ENCODE measurements at regions of chr16 and their contacts with region 1.

Region 1: DNA sequence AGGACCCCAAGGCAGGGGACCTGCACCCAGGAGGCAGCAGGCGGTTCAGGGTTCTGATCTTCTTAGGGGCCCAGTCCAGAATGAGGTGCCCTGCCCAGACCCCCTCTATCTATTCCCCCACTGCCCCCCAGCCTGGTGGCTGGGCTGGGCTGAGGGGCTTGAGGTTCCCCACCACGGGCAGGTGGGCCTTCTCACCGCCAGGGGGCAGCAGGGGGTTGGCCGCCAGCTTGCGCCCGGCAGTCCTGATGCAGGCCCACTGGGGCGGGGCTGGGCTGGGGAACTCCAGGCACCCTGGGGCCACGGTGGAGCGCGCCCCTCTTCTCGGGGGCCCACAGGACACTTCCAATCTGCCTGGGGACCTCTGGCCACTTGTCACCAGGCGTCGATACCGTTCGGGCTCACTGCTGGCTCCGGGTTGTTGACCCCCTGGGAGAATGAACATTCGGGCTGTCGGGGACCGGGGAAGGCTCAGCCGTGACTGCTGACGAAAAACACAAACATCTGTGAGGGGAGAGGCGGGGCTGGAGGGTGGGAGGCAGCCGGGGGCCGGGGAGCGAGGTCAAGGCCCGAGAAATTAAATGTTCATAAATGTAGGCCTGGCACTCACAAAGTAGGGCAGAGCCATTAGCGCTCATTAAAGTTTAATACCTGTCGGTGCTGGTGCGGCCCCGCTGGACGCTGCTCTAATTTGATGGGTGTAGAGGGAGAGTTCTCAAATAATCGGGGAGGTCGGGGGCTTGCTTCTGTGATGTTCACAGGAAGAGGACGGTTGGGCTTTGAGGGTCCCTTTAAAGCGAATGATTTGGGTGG is 219.2 kb upstream of the GSE1 start:
- DNase-seq: peak; percentile 65 to 84
- ATAC-seq: peak; percentile 40 to 69; a peak in 3 of 6 replicates
- H3K4me3 ChIP-seq: no peak overlapping the region
- H3K27ac ChIP-seq: peak overlapping the region in 1 of 2 experiments; percentile 86; a peak in 4 of 6 replicates
- H3K4me1 ChIP-seq: peaks cover 67% of the 10 kb centered on the region
- CTCF ChIP-seq: peak; percentile 84
- EP300 ChIP-seq: no peak
- POLR2A ChIP-seq: no peak
- RAD21 ChIP-seq: peak; percentile 58 to 69

Region 2: DNA sequence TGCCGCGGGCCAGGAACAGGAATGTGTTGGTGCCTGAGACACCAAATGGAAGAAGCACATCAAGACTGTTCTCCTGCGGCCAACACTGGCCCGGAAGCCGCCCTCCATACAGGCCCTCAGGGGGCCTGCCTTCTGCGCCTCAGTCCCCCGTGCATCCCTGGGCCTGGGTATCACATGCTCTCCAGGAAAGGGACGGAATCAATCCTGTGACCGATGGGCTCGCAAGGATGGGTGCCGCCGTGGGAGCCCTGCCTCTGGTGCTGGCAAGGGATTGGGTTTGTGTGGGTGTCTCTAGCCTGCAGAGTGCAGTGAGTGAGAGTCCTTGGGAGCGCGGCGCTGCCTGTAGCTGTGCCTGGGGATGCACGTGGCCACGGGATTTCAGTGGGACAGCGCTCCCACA is 301.0 kb before region 1 on chr16:
- CTCF ChIA-PET with region 1: no interaction called
- POLR2A ChIA-PET with region 1: no interaction called
- DNase-seq: no peak
- ATAC-seq: no peak
- H3K4me3 ChIP-seq: no peak overlapping the region
- H3K27ac ChIP-seq: no peak overlapping the region
- H3K4me1 ChIP-seq: no peaks in the 10 kb centered on the region
- CTCF ChIP-seq: no peak
- EP300 ChIP-seq: no peak
- POLR2A ChIP-seq: no peak
- RAD21 ChIP-seq: no peak

Region 3: DNA sequence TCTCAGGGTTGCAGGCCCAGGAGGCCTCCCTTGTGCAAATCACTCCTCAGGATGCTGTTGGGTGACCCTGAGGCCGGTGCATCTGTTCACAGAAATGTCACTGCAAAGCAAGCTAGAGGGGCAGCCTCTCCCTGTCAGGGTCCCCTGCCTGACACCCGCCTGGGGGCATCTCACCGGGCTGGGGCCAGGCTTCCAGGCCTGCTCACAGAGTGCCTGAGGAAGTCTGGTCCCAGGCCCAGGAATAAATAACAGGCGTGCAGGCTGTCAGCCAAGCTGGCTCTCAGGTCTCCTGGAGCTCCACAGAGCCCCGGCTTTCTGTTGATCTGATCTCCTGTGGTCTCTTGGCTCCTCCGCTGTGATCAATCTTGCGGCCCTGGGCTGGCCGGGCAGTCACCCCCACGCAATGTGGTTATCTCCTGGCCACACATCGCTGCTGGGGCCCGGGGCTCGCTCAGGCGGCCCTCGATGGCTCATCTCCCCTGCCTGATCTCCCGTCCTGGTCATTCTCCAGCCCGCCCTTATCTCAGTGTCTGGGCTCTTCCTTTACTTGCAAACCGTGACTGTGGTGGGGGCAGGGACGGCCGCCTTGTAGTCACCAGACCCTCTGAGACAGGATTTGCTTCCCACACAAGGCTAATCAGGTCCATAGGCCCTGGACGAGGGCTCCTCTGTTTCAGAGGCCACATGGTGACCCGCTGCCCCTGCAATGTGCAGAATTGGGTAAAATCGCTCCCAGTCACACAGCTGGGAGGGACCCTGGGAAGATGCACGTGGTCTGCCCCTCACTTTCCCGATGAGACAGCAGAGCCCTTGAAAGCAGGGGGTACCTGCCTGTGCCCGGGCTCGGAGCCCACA is 11.9 kb before region 1 on chr16:
- CTCF ChIA-PET with region 1: interaction called, 35 read pairs
- POLR2A ChIA-PET with region 1: no interaction called
- DNase-seq: no peak
- ATAC-seq: no peak
- H3K4me3 ChIP-seq: no peak overlapping the region
- H3K27ac ChIP-seq: no peak overlapping the region
- H3K4me1 ChIP-seq: no peaks in the 10 kb centered on the region
- CTCF ChIP-seq: no peak
- EP300 ChIP-seq: no peak
- POLR2A ChIP-seq: no peak
- RAD21 ChIP-seq: no peak

Region 4: GRCh38 chr16:85498273-85499006 is 104.6 kb after region 1 on chr16:
- CTCF ChIA-PET with region 1: no interaction called
- POLR2A ChIA-PET with region 1: no interaction called
- DNase-seq: no peak
- ATAC-seq: no peak
- H3K4me3 ChIP-seq: no peak overlapping the region
- H3K27ac ChIP-seq: no peak overlapping the region
- H3K4me1 ChIP-seq: no peaks in the 10 kb centered on the region
- CTCF ChIP-seq: no peak
- EP300 ChIP-seq: no peak
- POLR2A ChIP-seq: no peak
- RAD21 ChIP-seq: no peak

Measured in A549 (cell line).